Activated CD4-positive, alpha-beta memory T cell treated with anti-CD3 and anti-CD28 coated beads for 36 hours (primary cell): ENCODE measurements at regions of chr4 and their contacts with region 1.

Region 1: DNA sequence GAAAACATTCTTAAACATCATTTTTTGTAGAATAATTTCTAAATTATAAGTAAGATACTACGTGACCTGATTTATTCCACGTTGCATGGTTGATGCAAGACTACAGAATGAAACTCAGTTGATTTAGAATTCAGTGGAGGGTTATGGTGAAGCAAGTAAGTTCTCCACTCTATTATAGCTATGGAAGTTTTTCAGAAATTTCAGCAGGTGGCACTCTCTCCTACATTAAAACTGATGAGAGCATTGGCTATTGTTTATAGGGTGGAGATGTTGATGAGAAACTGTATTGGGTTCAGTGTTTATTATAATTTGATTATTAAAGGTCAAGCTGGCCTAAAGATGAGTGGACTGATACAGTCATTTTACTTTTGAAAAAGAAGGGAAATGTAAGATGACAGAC is 88.0 kb downstream of the FNIP2 start:
- DNase-seq: no peak
- H3K4me3 Mint-ChIP-seq: no peak overlapping the region
- H3K27ac Mint-ChIP-seq: no peak overlapping the region
- H3K4me1 Mint-ChIP-seq: peaks cover 2% of the 10 kb centered on the region
- H3K27me3 Mint-ChIP-seq: no peaks in the 10 kb centered on the region

Region 2: GRCh38 chr4:159102622-159103383 is 246.0 kb after region 1 on chr4 and contains the start of gene RAPGEF2:
- CTCF ChIA-PET with region 1: no interaction called
- POLR2A ChIA-PET with region 1: no interaction called
- intact Hi-C with region 1: loop called (anchors 10 kb)
- DNase-seq: peak; percentile 91
- H3K4me3 Mint-ChIP-seq: peak within 1 kb of the TSS; percentile 79
- H3K27ac Mint-ChIP-seq: peak within 1 kb of the TSS; percentile 81
- H3K4me1 Mint-ChIP-seq: peaks cover 46% of the 10 kb centered on the region
- H3K27me3 Mint-ChIP-seq: peaks cover 5% of the 10 kb centered on the region
- total RNA-seq, gene RAPGEF2: 18.6 to 22.0 TPM

Region 3: GRCh38 chr4:159175085-159175988 is 318.5 kb after region 1 on chr4:
- CTCF ChIA-PET with region 1: interaction called, 17 read pairs
- POLR2A ChIA-PET with region 1: no interaction called
- intact Hi-C with region 1: loop called (anchors 1 kb)
- DNase-seq: peak; percentile 69
- H3K4me3 Mint-ChIP-seq: no peak overlapping the region
- H3K27ac Mint-ChIP-seq: no peak overlapping the region
- H3K4me1 Mint-ChIP-seq: peaks cover 56% of the 10 kb centered on the region
- H3K27me3 Mint-ChIP-seq: no peaks in the 10 kb centered on the region

Region 4: GRCh38 chr4:159201168-159201567 is 344.3 kb after region 1 on chr4:
- CTCF ChIA-PET with region 1: interaction called, 46 read pairs
- POLR2A ChIA-PET with region 1: no interaction called
- intact Hi-C with region 1: loop called (anchors 1 kb)
- DNase-seq: no peak
- H3K4me3 Mint-ChIP-seq: no peak overlapping the region
- H3K27ac Mint-ChIP-seq: no peak overlapping the region
- H3K4me1 Mint-ChIP-seq: peaks cover 32% of the 10 kb centered on the region
- H3K27me3 Mint-ChIP-seq: no peaks in the 10 kb centered on the region

Region 5: DNA sequence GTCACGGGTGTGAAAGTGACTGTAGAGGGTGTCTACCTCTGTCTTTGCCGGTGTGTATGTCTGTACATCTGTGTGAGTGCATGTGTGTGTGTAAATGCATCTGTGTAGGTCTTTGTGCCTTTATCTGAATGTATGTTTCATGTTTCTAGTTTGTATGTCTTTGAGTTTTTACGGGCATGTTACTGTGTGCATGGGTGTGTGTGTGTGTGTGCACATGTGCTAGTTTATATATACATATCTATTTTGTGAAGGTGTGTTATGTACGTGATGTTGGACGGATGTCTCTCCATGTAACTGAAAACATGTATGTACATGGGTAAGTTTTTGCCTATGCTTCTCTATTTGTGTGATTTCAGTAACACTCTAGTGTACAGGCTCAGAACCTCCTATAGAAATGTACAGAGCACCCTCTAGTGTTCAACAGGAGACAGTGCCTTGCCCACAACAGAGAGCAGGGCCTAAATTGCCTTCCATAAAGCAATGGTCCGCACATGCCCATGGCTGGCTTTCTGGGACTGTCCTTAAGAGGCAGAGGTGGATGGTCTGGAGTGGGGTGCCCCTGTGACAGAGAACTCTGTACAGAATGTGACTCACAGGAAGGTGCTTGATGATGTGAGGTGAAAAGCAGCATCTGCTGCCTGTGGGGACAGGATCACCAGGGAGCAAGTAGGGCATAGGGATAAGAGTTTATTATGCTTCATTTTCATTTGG is 589.6 kb after region 1 on chr4:
- CTCF ChIA-PET with region 1: no interaction called
- POLR2A ChIA-PET with region 1: no interaction called
- intact Hi-C with region 1: loop called (anchors 2 kb)
- DNase-seq: peak; percentile 28
- H3K4me3 Mint-ChIP-seq: no peak overlapping the region
- H3K27ac Mint-ChIP-seq: no peak overlapping the region
- H3K4me1 Mint-ChIP-seq: no peaks in the 10 kb centered on the region
- H3K27me3 Mint-ChIP-seq: peaks cover 9% of the 10 kb centered on the region